Activated CD8-positive, alpha-beta T cell treated with anti-CD3 and anti-CD28 coated beads for 36 hours (primary cell): ENCODE measurements at regions of chr5 and their contacts with region 1.

Region 1: GRCh38 chr5:100903039-100903887 is at the start of gene ST8SIA4:
- DNase-seq: peak; percentile 98
- ATAC-seq: peak; percentile 72
- H3K4me3 Mint-ChIP-seq: peak within 1 kb of the TSS; percentile 98
- H3K27ac Mint-ChIP-seq: peak within 1 kb of the TSS; percentile 98
- H3K4me1 Mint-ChIP-seq: peaks cover 30% of the 10 kb centered on the region
- H3K27me3 Mint-ChIP-seq: no peaks in the 10 kb centered on the region
- CTCF ChIP-seq: no peak
- total RNA-seq, gene ST8SIA4: 31.6 to 34.1 TPM

Region 2: GRCh38 chr5:100535060-100536005 is 367.9 kb before region 1 on chr5 and contains the start of gene FAM174A:
- CTCF ChIA-PET with region 1: interaction called, 5 read pairs
- POLR2A ChIA-PET with region 1: no interaction called
- intact Hi-C with region 1: loop called (anchors 5 kb)
- DNase-seq: peak; percentile 96
- ATAC-seq: peak; percentile 92
- H3K4me3 Mint-ChIP-seq: peak within 1 kb of the TSS; percentile 97
- H3K27ac Mint-ChIP-seq: peak within 1 kb of the TSS; percentile 89
- H3K4me1 Mint-ChIP-seq: peaks cover 23% of the 10 kb centered on the region
- H3K27me3 Mint-ChIP-seq: no peaks in the 10 kb centered on the region
- CTCF ChIP-seq: no peak
- total RNA-seq, gene FAM174A: 5.9 to 6.6 TPM

Region 3: GRCh38 chr5:100777680-100778281 is 125.5 kb before region 1 on chr5:
- CTCF ChIA-PET with region 1: interaction called, 29 read pairs
- POLR2A ChIA-PET with region 1: interaction called, 50 read pairs
- intact Hi-C with region 1: loop called (anchors 1 kb)
- DNase-seq: peak; percentile 43
- ATAC-seq: peak; percentile 51
- H3K4me3 Mint-ChIP-seq: peak overlapping the region; percentile 26
- H3K27ac Mint-ChIP-seq: peak overlapping the region; percentile 88
- H3K4me1 Mint-ChIP-seq: peaks cover 45% of the 10 kb centered on the region
- H3K27me3 Mint-ChIP-seq: no peaks in the 10 kb centered on the region
- CTCF ChIP-seq: no peak

Region 4: DNA sequence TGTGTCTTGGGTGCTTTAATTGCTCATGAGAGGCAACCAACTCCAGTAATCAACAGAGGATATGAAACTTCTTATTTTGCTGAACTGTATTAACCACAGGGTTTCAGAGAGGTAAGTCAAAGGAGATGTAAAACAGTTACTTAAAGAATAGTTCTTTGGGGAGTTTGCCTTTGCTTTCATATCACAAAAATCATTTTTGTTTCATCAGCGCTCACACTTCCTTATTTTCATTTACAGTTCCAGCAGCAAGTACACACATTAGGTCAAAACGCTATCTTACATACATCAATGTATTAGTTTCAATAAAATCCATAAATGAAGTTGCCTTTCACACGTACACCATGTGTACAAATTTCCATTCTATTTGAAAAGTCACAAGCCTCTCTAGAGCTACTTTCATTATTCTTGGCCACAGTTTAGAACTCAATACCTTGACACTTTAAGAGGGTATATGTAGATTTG is 50.2 kb before region 1 on chr5:
- CTCF ChIA-PET with region 1: interaction called, 16 read pairs
- POLR2A ChIA-PET with region 1: interaction called, 124 read pairs
- intact Hi-C with region 1: loop called (anchors 2 kb)
- DNase-seq: no peak
- ATAC-seq: peak; percentile 90
- H3K4me3 Mint-ChIP-seq: peak overlapping the region; percentile 54
- H3K27ac Mint-ChIP-seq: peak overlapping the region; percentile 93
- H3K4me1 Mint-ChIP-seq: peaks cover 37% of the 10 kb centered on the region
- H3K27me3 Mint-ChIP-seq: no peaks in the 10 kb centered on the region
- CTCF ChIP-seq: no peak

Region 5: DNA sequence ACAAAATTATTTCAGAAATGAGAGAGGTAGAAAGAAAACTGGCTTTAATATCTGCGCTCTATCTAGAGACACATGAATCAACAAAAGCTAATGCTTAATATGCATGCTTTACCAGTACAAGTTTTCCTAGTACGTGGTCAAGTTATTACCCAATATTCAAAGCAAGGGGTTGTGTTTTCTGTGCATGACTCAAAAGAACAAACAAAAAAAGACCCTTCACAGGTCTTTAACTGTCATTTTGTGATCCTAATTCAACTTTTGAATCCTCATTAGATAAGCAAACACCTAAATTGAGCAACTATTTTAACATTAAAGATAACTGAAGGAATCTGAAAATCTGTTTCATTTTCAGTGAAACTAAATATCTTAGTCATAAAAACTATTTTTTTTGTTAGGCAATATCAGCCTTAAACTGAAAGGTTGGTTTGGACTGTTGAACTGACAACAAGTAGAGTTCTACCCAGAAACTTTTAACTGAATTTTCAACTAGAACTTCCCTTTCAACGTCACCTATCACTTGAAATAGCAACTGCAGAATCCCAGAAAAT is 12.7 kb before region 1 on chr5:
- CTCF ChIA-PET with region 1: interaction called, 43 read pairs
- POLR2A ChIA-PET with region 1: interaction called, 63 read pairs
- intact Hi-C with region 1: loop called (anchors 1 kb)
- DNase-seq: no peak
- ATAC-seq: peak; percentile 60
- H3K4me3 Mint-ChIP-seq: peak overlapping the region; percentile 60
- H3K27ac Mint-ChIP-seq: peak overlapping the region; percentile 90
- H3K4me1 Mint-ChIP-seq: peaks cover 68% of the 10 kb centered on the region
- H3K27me3 Mint-ChIP-seq: no peaks in the 10 kb centered on the region
- CTCF ChIP-seq: no peak